ENCODE measurements at regions of chr17 and their contacts with region 1.

Region 1: DNA sequence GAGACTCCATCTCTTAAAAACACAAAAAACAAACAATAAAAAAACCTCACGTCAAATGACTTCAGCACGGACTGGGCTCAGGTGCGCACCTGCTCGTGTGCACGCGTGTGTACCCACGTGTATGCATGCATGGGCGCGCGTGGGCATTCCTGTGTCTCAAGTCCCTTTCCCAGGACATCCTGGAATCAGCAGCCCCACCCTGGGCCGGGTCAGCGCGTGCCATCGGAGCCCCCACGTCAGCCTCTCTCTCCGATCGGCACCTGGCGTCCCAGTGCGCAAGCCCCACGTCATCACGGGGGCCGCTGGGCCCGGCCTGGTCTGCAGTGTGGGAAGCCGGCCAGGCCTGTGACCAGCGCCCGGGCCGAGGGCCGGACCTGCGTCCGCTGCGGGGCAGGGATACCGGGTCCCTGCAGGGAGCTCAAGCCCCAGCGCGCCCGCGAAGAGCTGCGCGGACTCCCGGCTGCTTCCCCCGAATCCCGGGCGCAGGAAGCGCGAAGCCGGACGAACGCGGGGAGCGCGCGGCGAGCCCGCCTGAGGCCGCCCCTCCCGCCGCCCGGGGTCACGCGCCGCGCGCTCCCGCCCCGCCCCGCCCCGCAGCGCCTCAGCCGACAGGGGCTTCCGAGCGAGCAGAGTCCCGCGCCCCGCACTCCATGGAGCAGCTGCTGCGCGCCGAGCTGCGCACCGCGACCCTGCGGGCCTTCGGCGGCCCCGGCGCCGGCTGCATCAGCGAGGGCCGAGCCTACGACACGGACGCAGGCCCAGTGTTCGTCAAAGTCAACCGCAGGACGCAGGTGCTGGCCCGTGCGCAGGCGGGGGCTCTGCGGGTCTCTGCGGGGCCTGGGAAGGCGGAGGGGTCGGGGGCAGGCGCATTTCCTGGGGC is at the start of gene FN3K:
- DNase-seq: peak; percentile 53 to 96 (median 74)

Region 2: DNA sequence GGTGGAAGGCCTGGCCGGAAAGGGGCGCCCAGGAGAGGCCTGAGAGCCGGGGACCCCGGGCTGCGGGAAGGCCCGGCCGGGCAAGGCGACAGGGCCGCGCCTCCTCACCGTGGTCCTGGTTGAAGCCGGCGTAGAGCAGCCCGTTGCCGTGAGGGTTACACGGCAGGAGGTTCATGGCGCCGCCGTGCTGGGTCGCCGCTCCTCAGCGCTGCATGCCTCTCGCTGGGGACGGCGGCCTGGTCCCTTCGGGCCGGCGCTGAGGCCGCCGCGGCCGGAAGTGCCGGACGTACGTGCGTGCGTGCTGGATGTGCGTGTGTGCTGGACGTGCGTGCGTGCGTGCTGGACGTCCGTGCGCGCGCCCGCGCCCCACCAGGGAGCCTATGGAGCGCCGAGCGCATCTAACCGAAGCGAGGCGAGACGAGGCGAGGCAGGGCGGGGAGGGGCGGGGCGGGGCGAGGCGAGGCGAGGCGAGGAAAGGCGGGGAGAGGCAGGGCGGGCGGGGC is 87.0 kb before region 1 on chr17 and contains the start of gene WDR45B:
- intact Hi-C with region 1: loop called (anchors 5 kb)
- DNase-seq: peak; percentile 87 to 100 (median 94)

Region 3: DNA sequence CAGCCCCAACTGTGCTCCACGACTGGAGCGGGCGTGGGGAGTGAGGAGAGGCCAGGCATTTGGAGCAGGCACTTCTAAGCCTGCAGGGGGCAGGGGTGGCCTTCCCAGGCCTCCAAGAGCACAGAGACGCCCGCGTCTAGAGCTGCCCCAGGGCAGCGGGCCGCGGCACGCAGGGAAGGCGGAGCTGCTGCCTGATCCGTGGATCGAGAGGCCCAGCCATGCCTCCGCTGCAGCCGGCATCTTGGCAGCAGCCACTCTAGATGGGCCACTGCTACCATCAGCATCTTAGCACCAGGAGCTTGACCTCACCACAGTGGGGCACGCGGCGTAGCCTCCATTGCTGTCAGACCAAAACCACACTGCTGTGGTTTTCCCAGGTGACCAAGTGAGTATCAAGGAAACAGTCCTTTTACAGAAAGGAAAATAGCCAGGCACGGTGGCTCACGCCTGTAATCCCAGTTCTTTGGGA is 66.6 kb before region 1 on chr17:
- intact Hi-C with region 1: loop called (anchors 5 kb)
- DNase-seq: peak; percentile 54 to 97 (median 70)

Region 4: GRCh38 chr17:82698065-82698973 is 36.9 kb before region 1 on chr17 and contains the start of gene RAB40B:
- intact Hi-C with region 1: loop called (anchors 1 kb)
- DNase-seq: peak; percentile 99 to 100 (median 100)

Measured in posterior cingulate gyrus (tissue), 11 donors.